ENCODE measurements at regions of chr4 and their contacts with region 1.

Region 1: GRCh38 chr4:2798399-2799223 is 5.7 kb downstream of the SH3BP2 start:
- DNase-seq: peak; percentile 68
- ATAC-seq: peak; percentile 69
- H3K4me3 Mint-ChIP-seq: peak overlapping the region; percentile 82
- H3K27ac Mint-ChIP-seq: peak overlapping the region; percentile 91
- H3K4me1 Mint-ChIP-seq: peaks cover 56% of the 10 kb centered on the region
- H3K27me3 Mint-ChIP-seq: no peaks in the 10 kb centered on the region

Region 2: DNA sequence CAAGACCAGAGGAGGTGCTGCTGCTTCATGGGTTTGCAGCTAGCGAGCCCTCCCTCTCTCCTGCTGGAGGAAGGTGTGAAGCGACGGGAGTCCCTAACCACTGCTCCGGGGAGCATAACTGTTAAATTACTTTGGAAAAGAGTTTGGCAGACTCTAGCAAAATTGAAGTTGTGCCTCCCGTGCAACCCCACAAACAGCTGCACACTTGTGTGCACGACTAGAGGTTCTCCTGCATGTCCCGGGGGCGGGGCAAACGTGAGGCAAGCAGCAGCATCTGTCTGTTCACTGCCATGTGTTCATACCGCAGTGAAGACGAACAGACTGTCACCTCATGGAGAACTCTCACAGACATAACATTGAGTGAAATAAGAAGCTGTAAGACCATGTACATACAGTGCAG is 77.0 kb before region 1 on chr4:
- CTCF ChIA-PET with region 1: no interaction called
- POLR2A ChIA-PET with region 1: no interaction called
- DNase-seq: no peak
- ATAC-seq: no peak
- H3K4me3 Mint-ChIP-seq: no peak overlapping the region
- H3K27ac Mint-ChIP-seq: no peak overlapping the region
- H3K4me1 Mint-ChIP-seq: peaks cover 6% of the 10 kb centered on the region
- H3K27me3 Mint-ChIP-seq: no peaks in the 10 kb centered on the region

Region 3: DNA sequence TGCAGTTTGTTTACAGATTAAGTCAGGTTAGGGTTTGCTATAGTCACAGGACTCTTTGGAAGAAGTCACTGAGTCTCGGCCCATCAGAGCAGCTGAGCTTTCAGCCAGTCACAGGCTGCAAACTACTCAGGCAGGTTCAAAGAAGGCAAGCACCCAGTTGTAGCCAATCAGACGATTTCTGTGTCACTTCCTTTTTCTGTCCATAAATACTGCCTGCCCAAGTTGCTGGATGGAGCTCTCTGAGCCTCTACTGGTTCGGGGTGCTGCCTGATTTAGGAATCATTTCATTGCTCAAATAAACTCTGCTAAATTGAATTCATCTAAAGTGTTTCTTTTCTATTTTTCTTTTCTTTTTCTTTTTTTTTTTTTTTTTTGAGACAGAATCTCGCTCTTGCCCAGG is 13.0 kb before region 1 on chr4:
- CTCF ChIA-PET with region 1: interaction called, 4 read pairs
- POLR2A ChIA-PET with region 1: interaction called, 11 read pairs
- DNase-seq: peak; percentile 54
- ATAC-seq: peak; percentile 61
- H3K4me3 Mint-ChIP-seq: no peak overlapping the region
- H3K27ac Mint-ChIP-seq: no peak overlapping the region
- H3K4me1 Mint-ChIP-seq: peaks cover 37% of the 10 kb centered on the region
- H3K27me3 Mint-ChIP-seq: peaks cover 8% of the 10 kb centered on the region

Region 4: GRCh38 chr4:2811830-2812611 is 13.4 kb after region 1 on chr4:
- CTCF ChIA-PET with region 1: interaction called, 4 read pairs
- POLR2A ChIA-PET with region 1: interaction called, 30 read pairs
- DNase-seq: peak; percentile 82
- ATAC-seq: peak; percentile 85
- H3K4me3 Mint-ChIP-seq: peak overlapping the region; percentile 92
- H3K27ac Mint-ChIP-seq: peak overlapping the region; percentile 98
- H3K4me1 Mint-ChIP-seq: peaks cover 58% of the 10 kb centered on the region
- H3K27me3 Mint-ChIP-seq: no peaks in the 10 kb centered on the region

Measured in activated CD8-positive, alpha-beta T cell treated with anti-CD3 and anti-CD28 coated beads, Interleukin-2, amount 10 ng/mL, durations not matched to agents 7 days and 5 days (primary cell).